ENCODE measurements at regions of chrX and their contacts with region 1.

Region 1: DNA sequence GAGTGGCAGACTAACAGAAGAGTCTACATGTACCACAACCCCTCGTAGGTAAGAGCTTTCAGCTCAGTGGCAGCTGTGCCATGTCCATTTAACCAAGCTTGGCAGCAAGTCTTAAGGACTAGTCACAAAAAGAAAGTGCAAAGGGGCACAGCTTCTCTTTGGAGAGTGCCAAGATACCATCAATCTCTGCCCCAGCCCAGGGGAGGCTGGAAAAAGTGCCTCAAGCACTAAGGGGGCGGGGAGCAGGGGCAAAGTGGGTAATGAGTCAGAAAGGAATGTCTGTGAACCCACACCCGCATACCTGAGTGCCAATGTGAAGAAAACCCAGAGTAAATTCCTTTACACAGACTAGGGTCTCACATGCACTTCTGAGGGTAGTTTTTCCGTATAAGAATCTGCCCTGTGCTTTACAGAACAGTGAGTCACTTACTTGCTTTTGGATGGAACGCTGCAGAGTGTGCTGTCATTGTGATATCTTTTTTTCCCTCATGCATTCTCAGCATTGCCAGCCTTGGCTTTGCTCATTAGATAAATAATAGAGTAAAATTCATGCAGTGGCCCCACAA is 219.8 kb downstream of the ZNF674 start:
- DNase-seq: peak; percentile 67
- H3K4me3 Mint-ChIP-seq: no peak overlapping the region
- H3K27ac Mint-ChIP-seq: peak overlapping the region; percentile 83
- H3K4me1 Mint-ChIP-seq: peaks cover 71% of the 10 kb centered on the region
- H3K27me3 Mint-ChIP-seq: no peaks in the 10 kb centered on the region

Region 2: DNA sequence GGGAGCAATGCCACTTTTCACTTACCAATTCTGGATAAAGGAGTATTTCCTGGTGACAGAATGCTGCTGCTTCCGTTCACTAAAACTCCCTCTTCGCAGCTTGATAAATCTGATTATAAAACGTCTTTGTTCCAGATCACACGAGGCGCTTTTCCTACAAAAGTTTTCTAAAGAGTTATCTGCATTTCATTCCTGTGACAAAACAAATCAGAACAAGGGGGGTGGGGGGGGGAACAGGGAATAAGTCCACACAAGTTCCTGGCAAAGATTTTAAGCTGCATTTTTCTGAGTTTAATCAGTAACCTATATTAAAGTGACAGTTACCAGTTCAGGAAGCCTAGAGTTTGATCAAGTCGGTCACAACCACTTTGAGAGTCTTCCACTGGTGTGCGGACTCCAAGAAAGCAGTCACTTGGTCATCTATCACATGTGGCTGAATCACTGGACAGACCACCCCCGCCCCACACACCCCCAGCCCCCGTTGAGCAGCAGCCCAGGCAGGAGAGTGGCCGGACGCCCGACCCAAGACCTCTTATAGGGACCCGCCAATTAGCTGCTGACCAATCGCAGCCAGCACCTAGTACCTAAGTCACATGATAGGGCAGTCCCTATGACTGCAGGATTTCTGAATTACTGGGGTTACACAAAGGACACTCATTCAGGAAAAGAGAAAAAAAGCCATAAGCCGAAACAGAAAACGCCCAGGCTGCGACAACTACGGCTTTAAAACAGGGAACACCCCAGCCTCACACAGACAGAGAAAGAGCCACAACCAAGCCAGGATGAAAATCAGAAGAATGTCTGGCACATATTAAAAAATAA is 555.4 kb before region 1 on chrX:
- CTCF ChIA-PET with region 1: no interaction called
- intact Hi-C with region 1: loop called (anchors 10 kb)
- DNase-seq: peak; percentile 58
- H3K4me3 Mint-ChIP-seq: peak overlapping the region; percentile 79
- H3K27ac Mint-ChIP-seq: peak overlapping the region; percentile 91
- H3K4me1 Mint-ChIP-seq: peaks cover 46% of the 10 kb centered on the region
- H3K27me3 Mint-ChIP-seq: no peaks in the 10 kb centered on the region

Region 3: DNA sequence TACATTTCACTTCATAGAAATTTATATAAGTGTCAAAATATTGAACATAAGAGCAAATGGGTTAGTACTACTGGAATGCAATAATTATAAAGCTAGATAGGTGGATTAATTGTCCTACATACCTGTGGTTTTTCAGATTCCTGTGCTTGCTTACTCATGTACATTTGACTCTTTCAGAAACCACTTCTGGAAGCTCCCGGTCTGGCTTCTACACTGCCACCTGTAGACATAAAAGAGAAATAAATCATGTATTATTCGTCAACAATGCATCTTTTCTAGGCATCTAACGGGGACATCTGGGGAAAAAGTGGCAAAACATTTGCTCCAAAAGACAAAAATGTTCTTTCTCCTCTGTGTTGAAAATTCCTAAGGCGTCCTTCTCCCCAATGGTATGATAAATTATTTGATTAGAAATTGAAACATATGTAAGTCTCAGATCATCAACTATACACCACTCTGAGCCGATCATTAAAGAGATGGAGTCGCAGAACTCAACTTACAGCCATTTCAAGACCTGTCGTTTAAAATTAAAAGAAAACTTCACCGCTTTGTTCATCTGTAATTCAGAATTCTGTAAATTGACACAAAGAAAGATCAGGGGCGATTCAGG is 476.0 kb before region 1 on chrX:
- CTCF ChIA-PET with region 1: no interaction called
- intact Hi-C with region 1: loop called (anchors 10 kb)
- DNase-seq: peak; percentile 42
- H3K4me3 Mint-ChIP-seq: peak overlapping the region; percentile 97
- H3K27ac Mint-ChIP-seq: peak overlapping the region; percentile 95
- H3K4me1 Mint-ChIP-seq: peaks cover 37% of the 10 kb centered on the region
- H3K27me3 Mint-ChIP-seq: no peaks in the 10 kb centered on the region

Region 4: GRCh38 chrX:46279925-46280313 is 45.5 kb before region 1 on chrX:
- CTCF ChIA-PET with region 1: no interaction called
- intact Hi-C with region 1: loop called (anchors 2 kb)
- DNase-seq: no peak
- H3K4me3 Mint-ChIP-seq: no peak overlapping the region
- H3K27ac Mint-ChIP-seq: peak overlapping the region; percentile 72
- H3K4me1 Mint-ChIP-seq: peaks cover 24% of the 10 kb centered on the region
- H3K27me3 Mint-ChIP-seq: no peaks in the 10 kb centered on the region

Region 5: GRCh38 chrX:46376246-46376885 is 51.0 kb after region 1 on chrX:
- CTCF ChIA-PET with region 1: no interaction called
- intact Hi-C with region 1: loop called (anchors 5 kb)
- DNase-seq: peak; percentile 56
- H3K4me3 Mint-ChIP-seq: no peak overlapping the region
- H3K27ac Mint-ChIP-seq: no peak overlapping the region
- H3K4me1 Mint-ChIP-seq: peaks cover 20% of the 10 kb centered on the region
- H3K27me3 Mint-ChIP-seq: no peaks in the 10 kb centered on the region